Activated CD4-positive, alpha-beta memory T cell treated with anti-CD3 and anti-CD28 coated beads for 36 hours (primary cell): ENCODE measurements at regions of chr17 and their contacts with region 1.

Region 1: GRCh38 chr17:79970576-79971068 is 65.0 kb downstream of the TBC1D16 start:
- DNase-seq: peak; percentile 56
- H3K4me3 Mint-ChIP-seq: no peak overlapping the region
- H3K27ac Mint-ChIP-seq: no peak overlapping the region
- H3K4me1 Mint-ChIP-seq: no peaks in the 10 kb centered on the region
- H3K27me3 Mint-ChIP-seq: no peaks in the 10 kb centered on the region

Region 2: GRCh38 chr17:79789534-79790353 is 180.9 kb before region 1 on chr17:
- CTCF ChIA-PET with region 1: interaction called, 12 read pairs
- POLR2A ChIA-PET with region 1: no interaction called
- intact Hi-C with region 1: no loop called
- DNase-seq: peak; percentile 41
- H3K4me3 Mint-ChIP-seq: no peak overlapping the region
- H3K27ac Mint-ChIP-seq: no peak overlapping the region
- H3K4me1 Mint-ChIP-seq: peaks cover 3% of the 10 kb centered on the region
- H3K27me3 Mint-ChIP-seq: peaks cover 50% of the 10 kb centered on the region

Region 3: GRCh38 chr17:79951361-79952264 is 19.0 kb before region 1 on chr17:
- CTCF ChIA-PET with region 1: no interaction called
- POLR2A ChIA-PET with region 1: no interaction called
- intact Hi-C with region 1: no loop called
- DNase-seq: no peak
- H3K4me3 Mint-ChIP-seq: no peak overlapping the region
- H3K27ac Mint-ChIP-seq: no peak overlapping the region
- H3K4me1 Mint-ChIP-seq: no peaks in the 10 kb centered on the region
- H3K27me3 Mint-ChIP-seq: no peaks in the 10 kb centered on the region